ENCODE measurements at regions of chr1 and their contacts with region 1.

Region 1: DNA sequence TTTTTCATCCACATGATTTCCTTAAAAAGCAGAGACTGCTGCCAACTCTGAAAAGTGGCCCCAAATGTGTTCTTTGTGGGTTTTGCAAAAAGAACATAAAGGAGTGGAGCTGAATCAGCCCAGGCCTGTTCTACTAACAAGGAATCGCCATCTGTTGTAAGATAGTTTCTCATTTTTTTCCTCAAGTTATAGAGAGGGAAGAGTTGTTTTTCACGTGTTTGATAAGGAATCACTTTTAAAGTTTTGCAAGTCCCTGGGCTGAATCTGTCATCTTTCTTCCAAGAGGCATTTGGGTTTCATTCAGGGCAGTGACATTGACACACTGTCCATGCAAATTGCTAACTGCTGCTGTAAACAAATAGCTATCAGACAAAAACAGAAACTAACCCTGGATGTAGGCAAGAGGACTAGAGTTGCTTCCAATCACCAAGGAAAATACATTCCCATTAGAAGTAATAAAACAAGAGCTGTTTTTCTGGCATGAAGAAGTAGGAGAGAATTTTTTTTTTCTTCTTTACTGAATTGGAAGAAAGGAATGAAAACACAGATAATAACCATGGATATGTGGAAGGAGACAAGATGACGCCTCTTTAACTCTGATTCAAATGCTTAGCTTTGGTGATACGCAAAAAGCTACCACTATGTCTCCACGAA is 58.8 kb upstream of the TBX15 start:
- DNase-seq: no peak
- ATAC-seq: peak; percentile 60
- H3K4me3 ChIP-seq: peak overlapping the region in 1 of 2 donors; percentile 18
- H3K27ac ChIP-seq: no peak overlapping the region
- H3K4me1 ChIP-seq: peaks cover 0 to 3% of the 10 kb centered on the region in 2 donors
- H3K27me3 ChIP-seq: no peaks in the 10 kb centered on the region

Region 2: GRCh38 chr1:118871582-118872171 is 175.2 kb before region 1 on chr1:
- intact Hi-C with region 1: no loop called
- DNase-seq: no peak
- ATAC-seq: no peak
- H3K4me3 ChIP-seq: no peak overlapping the region
- H3K27ac ChIP-seq: no peak overlapping the region
- H3K4me1 ChIP-seq: no peaks in the 10 kb centered on the region
- H3K27me3 ChIP-seq: no peaks in the 10 kb centered on the region

Region 3: GRCh38 chr1:118979754-118980575 is 66.9 kb before region 1 on chr1:
- intact Hi-C with region 1: loop called in 1 of 2 experiments (anchors 10 kb)
- DNase-seq: no peak
- ATAC-seq: no peak
- H3K4me3 ChIP-seq: no peak overlapping the region
- H3K27ac ChIP-seq: no peak overlapping the region
- H3K4me1 ChIP-seq: no peaks in the 10 kb centered on the region
- H3K27me3 ChIP-seq: peaks cover 0 to 3% of the 10 kb centered on the region in 2 donors

Region 4: DNA sequence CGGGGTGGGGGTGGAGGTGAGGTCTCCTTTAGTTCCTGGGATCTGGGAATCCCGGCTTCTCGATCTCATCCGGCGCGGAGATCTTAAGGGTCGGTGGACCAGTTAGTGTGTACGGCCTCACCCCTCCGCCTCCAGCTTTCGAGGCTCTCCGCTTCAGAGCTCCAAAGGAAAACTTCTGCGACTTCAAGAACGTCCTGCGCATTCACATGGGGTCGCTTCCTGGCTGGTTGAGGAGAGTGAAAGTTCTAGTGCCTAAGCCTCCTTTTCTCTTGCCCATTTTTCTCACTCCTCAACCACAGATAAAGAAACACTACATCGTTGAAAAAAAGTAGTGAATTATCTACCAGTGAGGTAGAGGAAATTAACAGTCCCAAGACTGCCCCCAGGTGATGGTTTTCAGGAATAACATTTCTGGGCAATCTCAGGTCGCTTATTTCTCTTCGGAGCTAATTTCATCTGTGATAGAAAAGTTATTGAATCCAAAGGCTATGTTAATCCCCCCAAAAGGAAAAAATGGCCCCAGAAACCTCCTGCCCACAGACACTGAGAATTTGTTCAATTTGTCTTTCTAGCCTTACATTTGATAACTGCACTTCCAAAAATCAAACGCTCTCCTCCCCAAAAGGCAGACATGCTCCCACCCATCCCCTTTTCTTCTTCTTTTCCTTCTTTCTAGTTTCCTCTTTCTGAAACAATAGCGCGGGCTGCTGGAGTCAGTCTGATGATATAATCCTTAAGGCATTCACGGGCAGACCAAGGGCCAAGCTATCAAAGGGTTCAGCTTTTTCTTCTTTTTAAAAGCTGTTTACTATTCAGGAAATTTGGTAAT is 38.2 kb before region 1 on chr1:
- intact Hi-C with region 1: no loop called
- DNase-seq: no peak
- ATAC-seq: peak; percentile 70
- H3K4me3 ChIP-seq: peak overlapping the region in 1 of 2 donors; percentile 8
- H3K27ac ChIP-seq: no peak overlapping the region
- H3K4me1 ChIP-seq: no peaks in the 10 kb centered on the region
- H3K27me3 ChIP-seq: peaks cover 0 to 2% of the 10 kb centered on the region in 2 donors

Measured in aorta (tissue), 5 donors.